Activated B cell treated with CpG ODN at 0.5 μM for 24 hours (primary cell): ENCODE measurements at regions of chr5 and their contacts with region 1.

Region 1: GRCh38 chr5:131165119-131165727 is at the start of gene HINT1:
- DNase-seq: peak; percentile 91
- ATAC-seq: peak; percentile 83
- H3K4me3 Mint-ChIP-seq: peak within 1 kb of the TSS; percentile 96
- H3K27ac Mint-ChIP-seq: peak within 1 kb of the TSS; percentile 95
- H3K4me1 Mint-ChIP-seq: peaks cover 43% of the 10 kb centered on the region
- H3K27me3 Mint-ChIP-seq: no peaks in the 10 kb centered on the region
- CTCF ChIP-seq: no peak
- total RNA-seq, gene HINT1: 201 and 212 TPM in 2 replicates

Region 2: DNA sequence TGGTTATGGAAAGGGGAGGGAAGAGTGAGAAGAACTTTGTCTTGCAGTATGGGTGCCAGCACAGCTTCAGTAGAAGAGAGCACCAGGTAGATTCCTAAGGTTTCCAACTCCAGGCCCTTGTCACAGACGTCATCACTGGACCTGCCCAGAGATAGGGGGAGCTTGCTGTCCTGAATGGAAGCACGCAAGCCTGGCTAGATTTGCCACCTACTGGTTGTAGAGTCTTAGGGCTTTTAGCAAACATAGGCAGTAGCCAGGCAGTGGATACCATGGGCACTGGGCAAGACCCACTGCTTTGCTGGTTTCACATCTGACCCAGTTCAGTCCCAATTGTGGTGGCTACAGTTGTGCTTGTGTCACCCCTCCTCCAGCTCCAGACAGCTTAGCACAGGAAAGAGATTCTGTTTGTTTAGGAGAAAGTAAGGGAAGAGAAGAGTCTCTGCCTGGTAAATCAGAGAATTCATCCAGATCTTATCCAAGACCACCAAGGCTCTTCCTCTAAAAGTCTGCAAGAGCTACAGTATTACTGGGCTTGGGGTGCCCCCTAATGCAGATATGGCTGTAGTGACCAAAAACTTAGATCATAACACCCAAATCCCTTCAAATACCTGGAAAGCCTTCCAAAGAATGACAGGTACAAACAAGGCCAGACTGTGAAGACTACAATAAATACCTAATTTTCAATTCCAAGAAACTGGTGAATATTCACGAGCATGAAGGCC is 159.1 kb before region 1 on chr5:
- CTCF ChIA-PET with region 1: no interaction called
- POLR2A ChIA-PET with region 1: no interaction called
- intact Hi-C with region 1: no loop called
- DNase-seq: no peak
- ATAC-seq: no peak
- H3K4me3 Mint-ChIP-seq: no peak overlapping the region
- H3K27ac Mint-ChIP-seq: no peak overlapping the region
- H3K4me1 Mint-ChIP-seq: no peaks in the 10 kb centered on the region
- H3K27me3 Mint-ChIP-seq: peaks cover 3% of the 10 kb centered on the region
- CTCF ChIP-seq: no peak

Region 3: DNA sequence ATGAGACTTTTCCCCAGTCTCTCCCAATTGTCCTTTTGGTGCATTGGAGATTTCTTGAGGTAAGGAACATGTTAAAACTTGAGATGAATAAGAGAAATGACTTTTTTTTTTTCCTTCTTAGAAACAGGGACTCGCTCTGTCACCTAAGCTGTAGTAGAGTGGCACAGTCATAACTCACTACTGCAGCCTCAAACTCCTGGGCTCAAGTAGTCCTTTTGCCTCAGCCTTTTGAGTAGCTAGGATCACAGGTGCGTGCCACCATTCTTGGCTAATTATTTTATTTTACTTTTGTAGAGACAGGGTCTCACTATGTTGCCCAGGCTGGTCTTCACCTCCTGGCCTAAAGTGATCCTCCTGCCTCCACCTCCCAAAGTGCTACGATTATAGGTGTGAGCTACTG is 124.5 kb after region 1 on chr5:
- CTCF ChIA-PET with region 1: no interaction called
- POLR2A ChIA-PET with region 1: interaction called, 9 read pairs
- intact Hi-C with region 1: loop called (anchors 2 kb)
- DNase-seq: no peak
- ATAC-seq: peak; percentile 55
- H3K4me3 Mint-ChIP-seq: peak overlapping the region; percentile 24
- H3K27ac Mint-ChIP-seq: peak overlapping the region; percentile 84
- H3K4me1 Mint-ChIP-seq: peaks cover 64% of the 10 kb centered on the region
- H3K27me3 Mint-ChIP-seq: no peaks in the 10 kb centered on the region
- CTCF ChIP-seq: no peak

Region 4: DNA sequence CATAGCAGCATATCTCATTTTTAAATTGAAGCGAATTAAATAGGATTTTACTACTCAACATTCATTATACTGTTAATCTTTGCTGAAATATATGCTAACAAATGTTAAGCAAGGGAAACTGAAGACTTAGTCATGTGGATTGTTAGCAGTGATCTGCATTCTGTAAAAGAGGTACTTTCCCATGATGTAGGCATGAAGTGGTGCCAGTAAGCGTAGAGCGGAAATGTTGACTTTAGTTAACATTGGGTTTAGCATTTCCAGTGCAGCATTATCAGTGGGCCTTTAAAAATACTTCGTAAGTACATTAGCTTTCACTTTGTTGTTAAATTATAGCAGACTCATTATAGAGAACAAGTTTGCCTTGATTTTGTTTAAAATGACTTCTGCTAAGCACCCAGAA is 228.9 kb after region 1 on chr5:
- CTCF ChIA-PET with region 1: no interaction called
- POLR2A ChIA-PET with region 1: interaction called, 4 read pairs
- intact Hi-C with region 1: loop called (anchors 1 kb)
- DNase-seq: no peak
- ATAC-seq: peak; percentile 93
- H3K4me3 Mint-ChIP-seq: peak overlapping the region; percentile 73
- H3K27ac Mint-ChIP-seq: peak overlapping the region; percentile 88
- H3K4me1 Mint-ChIP-seq: peaks cover 71% of the 10 kb centered on the region
- H3K27me3 Mint-ChIP-seq: no peaks in the 10 kb centered on the region
- CTCF ChIP-seq: no peak

Region 5: GRCh38 chr5:131533836-131534235 is 368.6 kb after region 1 on chr5:
- CTCF ChIA-PET with region 1: no interaction called
- POLR2A ChIA-PET with region 1: no interaction called
- intact Hi-C with region 1: no loop called
- DNase-seq: no peak
- ATAC-seq: no peak
- H3K4me3 Mint-ChIP-seq: no peak overlapping the region
- H3K27ac Mint-ChIP-seq: no peak overlapping the region
- H3K4me1 Mint-ChIP-seq: peaks cover 36% of the 10 kb centered on the region
- H3K27me3 Mint-ChIP-seq: no peaks in the 10 kb centered on the region
- CTCF ChIP-seq: no peak